ENCODE measurements at regions of chr17 and their contacts with region 1.

Region 1: GRCh38 chr17:67326441-67326840 is 39.9 kb downstream of the PSMD12 start:
- DNase-seq: no peak
- H3K4me3 ChIP-seq: no peak overlapping the region
- H3K4me3 Mint-ChIP-seq: no peak overlapping the region
- H3K27ac Mint-ChIP-seq: no peak overlapping the region
- H3K4me1 ChIP-seq: peaks cover 6% of the 10 kb centered on the region; the same call in 1 of the 2 replicates
- H3K4me1 Mint-ChIP-seq: peaks cover 7% of the 10 kb centered on the region
- H3K27me3 ChIP-seq: no peaks in the 10 kb centered on the region
- H3K27me3 Mint-ChIP-seq: no peaks in the 10 kb centered on the region
- CTCF ChIP-seq: no peak

Region 2: DNA sequence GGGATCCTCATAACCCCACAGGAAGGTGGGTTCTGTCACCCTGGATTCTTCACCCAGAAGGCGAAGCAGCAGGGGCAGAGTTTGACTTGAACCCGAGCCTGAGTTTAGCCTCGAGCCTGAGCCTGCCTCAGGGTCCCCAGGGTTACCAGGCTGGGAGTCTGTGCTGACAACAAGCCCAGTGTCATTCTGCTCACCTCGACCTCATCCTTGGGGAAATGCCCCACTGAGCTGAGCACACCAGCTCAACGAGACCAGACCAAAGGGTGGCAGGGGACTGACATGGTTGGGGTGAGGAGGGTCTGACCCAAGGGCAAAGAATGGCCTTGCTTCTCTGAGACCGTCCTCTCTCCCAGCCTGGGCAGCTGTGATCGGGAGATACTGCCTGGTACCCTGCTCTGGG is 341.7 kb before region 1 on chr17:
- CTCF ChIA-PET with region 1: no interaction called
- POLR2A ChIA-PET with region 1: interaction called, 10 read pairs
- intact Hi-C with region 1: no loop called
- DNase-seq: no peak
- H3K4me3 ChIP-seq: no peak overlapping the region
- H3K4me3 Mint-ChIP-seq: no peak overlapping the region
- H3K27ac Mint-ChIP-seq: no peak overlapping the region
- H3K4me1 ChIP-seq: peaks cover 5% of the 10 kb centered on the region
- H3K4me1 Mint-ChIP-seq: no peaks in the 10 kb centered on the region
- H3K27me3 ChIP-seq: no peaks in the 10 kb centered on the region
- H3K27me3 Mint-ChIP-seq: no peaks in the 10 kb centered on the region
- CTCF ChIP-seq: no peak

Region 3: GRCh38 chr17:67293251-67294203 is 32.9 kb before region 1 on chr17:
- CTCF ChIA-PET with region 1: no interaction called
- POLR2A ChIA-PET with region 1: no interaction called
- intact Hi-C with region 1: no loop called
- DNase-seq: peak; percentile 47 to 49
- H3K4me3 ChIP-seq: no peak overlapping the region
- H3K4me3 Mint-ChIP-seq: no peak overlapping the region
- H3K27ac Mint-ChIP-seq: no peak overlapping the region
- H3K4me1 ChIP-seq: peaks cover 8% of the 10 kb centered on the region
- H3K4me1 Mint-ChIP-seq: peaks cover under 1% of the 10 kb centered on the region
- H3K27me3 ChIP-seq: no peaks in the 10 kb centered on the region
- H3K27me3 Mint-ChIP-seq: no peaks in the 10 kb centered on the region
- CTCF ChIP-seq: peak; percentile 48 to 57

Region 4: DNA sequence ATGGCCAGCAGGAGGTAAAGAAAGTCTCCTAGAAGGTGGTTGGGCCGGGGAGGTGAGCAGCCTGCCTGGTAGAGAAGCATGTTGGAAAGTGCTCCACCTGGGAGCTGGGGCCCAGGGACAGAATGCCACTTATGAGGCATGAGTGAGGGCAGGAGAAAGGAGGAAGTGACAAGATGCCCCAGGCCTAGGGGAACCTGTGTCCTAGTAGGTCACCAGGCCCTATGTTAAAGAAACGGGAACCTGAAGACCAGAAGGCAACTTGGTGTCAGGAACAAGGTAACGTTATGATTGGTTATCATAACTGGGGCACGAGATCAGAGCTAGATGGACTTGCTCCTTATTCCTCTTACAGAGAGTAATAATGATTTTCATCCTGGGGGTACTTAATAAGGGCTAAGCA is 85.0 kb after region 1 on chr17:
- CTCF ChIA-PET with region 1: no interaction called
- POLR2A ChIA-PET with region 1: no interaction called
- intact Hi-C with region 1: no loop called
- DNase-seq: no peak
- H3K4me3 ChIP-seq: no peak overlapping the region
- H3K4me3 Mint-ChIP-seq: no peak overlapping the region
- H3K27ac Mint-ChIP-seq: no peak overlapping the region
- H3K4me1 ChIP-seq: no peaks in the 10 kb centered on the region
- H3K4me1 Mint-ChIP-seq: no peaks in the 10 kb centered on the region
- H3K27me3 ChIP-seq: no peaks in the 10 kb centered on the region
- H3K27me3 Mint-ChIP-seq: no peaks in the 10 kb centered on the region
- CTCF ChIP-seq: no peak